IMR-90 (cell line): ENCODE measurements at regions of chr6 and their contacts with region 1.

Region 1: GRCh38 chr6:148186916-148187315 is 155.7 kb upstream of the SASH1 start:
- DNase-seq: no peak
- ATAC-seq: no peak
- H3K4me3 ChIP-seq: no peak overlapping the region
- H3K27ac ChIP-seq: no peak overlapping the region
- H3K4me1 ChIP-seq: peaks cover 3% of the 10 kb centered on the region
- H3K27me3 ChIP-seq: no peaks in the 10 kb centered on the region
- CTCF ChIP-seq: no peak
- POLR2A ChIP-seq: no peak
- RAD21 ChIP-seq: no peak

Region 2: GRCh38 chr6:148128014-148128730 is 58.7 kb before region 1 on chr6:
- CTCF ChIA-PET with region 1: no interaction called
- POLR2A ChIA-PET with region 1: no interaction called
- dilution Hi-C with region 1: no loop called
- in situ Hi-C with region 1: no loop called
- intact Hi-C with region 1: no loop called
- DNase-seq: no peak
- ATAC-seq: no peak
- H3K4me3 ChIP-seq: no peak overlapping the region
- H3K27ac ChIP-seq: no peak overlapping the region
- H3K4me1 ChIP-seq: no peaks in the 10 kb centered on the region
- H3K27me3 ChIP-seq: no peaks in the 10 kb centered on the region
- CTCF ChIP-seq: no peak
- POLR2A ChIP-seq: no peak
- RAD21 ChIP-seq: no peak

Region 3: GRCh38 chr6:148250975-148251685 is 64.2 kb after region 1 on chr6:
- CTCF ChIA-PET with region 1: no interaction called
- POLR2A ChIA-PET with region 1: no interaction called
- dilution Hi-C with region 1: no loop called
- in situ Hi-C with region 1: loop called (anchors 5 kb)
- intact Hi-C with region 1: no loop called
- DNase-seq: peak; percentile 80
- ATAC-seq: peak; percentile 86
- H3K4me3 ChIP-seq: no peak overlapping the region
- H3K27ac ChIP-seq: no peak overlapping the region
- H3K4me1 ChIP-seq: peaks cover 2% of the 10 kb centered on the region; the same call in 1 of the 2 replicates
- H3K27me3 ChIP-seq: no peaks in the 10 kb centered on the region
- CTCF ChIP-seq: peak; percentile 62
- POLR2A ChIP-seq: no peak
- RAD21 ChIP-seq: peak; percentile 82

Region 4: DNA sequence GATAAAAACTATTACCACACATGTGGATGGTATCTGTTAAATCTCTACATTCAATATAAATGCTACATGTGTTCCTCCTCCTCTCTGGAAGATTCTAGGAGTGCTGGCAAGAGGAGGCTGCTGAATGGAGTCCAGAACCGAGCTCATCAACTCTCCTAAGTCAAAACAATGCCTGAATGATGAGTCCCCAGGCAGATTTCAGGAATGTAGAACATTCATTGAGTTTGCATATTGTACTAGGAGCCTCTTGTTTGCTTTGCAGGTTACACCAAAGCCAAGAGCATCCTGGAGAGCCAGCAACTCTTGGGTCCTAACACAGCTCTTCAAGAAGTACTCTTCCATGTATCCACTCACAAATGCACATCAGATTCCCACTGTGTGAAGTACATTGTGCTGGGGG is 442.3 kb after region 1 on chr6:
- CTCF ChIA-PET with region 1: no interaction called
- POLR2A ChIA-PET with region 1: no interaction called
- dilution Hi-C with region 1: no loop called
- in situ Hi-C with region 1: no loop called
- intact Hi-C with region 1: no loop called
- DNase-seq: peak; percentile 44
- ATAC-seq: peak; percentile 63
- H3K4me3 ChIP-seq: no peak overlapping the region
- H3K27ac ChIP-seq: no peak overlapping the region
- H3K4me1 ChIP-seq: no peaks in the 10 kb centered on the region
- H3K27me3 ChIP-seq: no peaks in the 10 kb centered on the region; the same call in 1 of the 2 replicates
- CTCF ChIP-seq: no peak
- POLR2A ChIP-seq: no peak
- RAD21 ChIP-seq: no peak